Activated CD4-positive, alpha-beta T cell treated with anti-CD3 and anti-CD28 coated beads, Interleukin-2, amount 10 ng/mL, durations not matched to agents 24 days and 14 days (primary cell): ENCODE measurements at regions of chr4 and their contacts with region 1.

Region 1: DNA sequence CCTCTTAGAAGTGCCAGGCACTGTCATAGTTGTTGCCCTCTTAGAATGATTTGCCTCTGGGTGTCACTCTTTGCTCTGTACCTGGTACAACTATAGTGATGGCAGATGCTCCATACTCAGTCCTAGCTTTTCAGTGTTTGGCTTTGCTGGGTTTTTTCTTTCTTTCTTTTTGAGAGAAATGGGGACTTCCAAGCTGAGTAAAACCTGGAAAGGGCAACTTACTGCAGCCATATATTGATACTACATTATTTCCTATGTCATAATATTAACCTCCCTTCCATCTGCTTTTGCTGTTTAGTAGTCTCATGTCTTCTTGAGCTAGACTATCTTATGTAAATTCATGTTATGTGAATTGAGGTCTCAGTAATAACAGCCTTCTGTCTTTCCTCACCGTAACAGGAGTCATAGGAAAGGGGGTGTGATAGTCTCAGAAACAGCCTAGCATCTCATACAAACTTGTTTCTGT is 49.0 kb downstream of the NIPAL1 start:
- DNase-seq: no peak
- H3K4me3 Mint-ChIP-seq: no peak overlapping the region
- H3K27ac Mint-ChIP-seq: peak overlapping the region; percentile 43
- H3K4me1 Mint-ChIP-seq: peaks cover 15% of the 10 kb centered on the region
- H3K27me3 Mint-ChIP-seq: no peaks in the 10 kb centered on the region

Region 2: DNA sequence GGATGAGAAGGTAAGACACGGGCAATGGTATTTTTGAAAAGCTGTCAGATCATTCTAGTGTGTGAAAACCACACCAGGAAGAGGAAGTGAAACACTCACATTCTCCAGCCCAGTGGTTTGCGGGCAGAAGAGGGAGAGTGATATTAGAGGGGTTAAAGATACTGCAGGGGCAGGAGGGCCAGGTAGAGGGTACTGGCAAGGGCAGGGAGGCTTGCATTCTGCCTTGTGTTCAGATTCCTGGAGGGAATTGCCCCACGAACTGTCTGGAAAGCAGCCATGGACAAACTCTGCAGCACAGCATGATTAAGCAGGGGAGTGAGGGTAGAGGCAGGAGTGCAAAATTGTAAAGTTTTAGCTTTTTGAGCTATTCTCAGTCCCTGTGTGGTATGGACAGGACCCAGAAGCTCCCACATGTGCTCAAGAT is 18.2 kb before region 1 on chr4:
- intact Hi-C with region 1: loop called (anchors 2 kb)
- DNase-seq: peak; percentile 89
- H3K4me3 Mint-ChIP-seq: peak overlapping the region; percentile 38
- H3K27ac Mint-ChIP-seq: peak overlapping the region; percentile 61
- H3K4me1 Mint-ChIP-seq: peaks cover 39% of the 10 kb centered on the region
- H3K27me3 Mint-ChIP-seq: peaks cover 62% of the 10 kb centered on the region

Region 3: DNA sequence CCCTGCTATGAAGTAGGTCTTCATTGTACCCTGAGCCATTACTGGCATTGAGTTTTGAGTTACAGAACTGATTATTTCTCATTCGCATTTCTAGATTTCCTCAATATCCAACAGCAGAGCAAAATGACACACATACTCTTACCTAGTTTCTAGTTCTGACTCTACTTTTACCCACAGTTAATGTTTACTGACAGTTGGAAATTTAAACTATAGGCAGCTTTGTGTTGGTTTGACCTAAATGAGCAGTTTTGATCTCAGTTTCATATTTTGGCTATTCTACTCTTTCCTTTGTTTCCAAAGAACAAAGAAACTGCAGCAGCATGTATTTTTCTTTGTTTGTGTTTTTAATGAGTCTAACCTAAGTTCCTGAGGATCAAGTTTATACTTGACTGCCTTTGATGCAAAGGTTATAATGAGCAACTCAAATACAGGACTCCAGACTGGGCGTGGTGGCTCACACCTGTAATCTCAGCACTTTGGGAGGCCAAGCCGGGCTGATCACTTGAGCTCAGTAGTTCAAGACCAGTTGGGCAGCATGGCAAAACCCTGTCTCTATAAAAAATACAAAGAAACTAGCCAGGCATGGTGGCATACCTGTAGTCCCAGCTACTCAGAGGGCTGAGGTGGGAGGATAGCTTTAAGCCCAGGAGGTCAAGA is 38.0 kb after region 1 on chr4:
- intact Hi-C with region 1: loop called (anchors 2 kb)
- DNase-seq: peak; percentile 51
- H3K4me3 Mint-ChIP-seq: no peak overlapping the region
- H3K27ac Mint-ChIP-seq: peak overlapping the region; percentile 63
- H3K4me1 Mint-ChIP-seq: peaks cover 16% of the 10 kb centered on the region
- H3K27me3 Mint-ChIP-seq: no peaks in the 10 kb centered on the region